Dorsolateral prefrontal cortex (tissue), 120 donors: ENCODE measurements at regions of chrX and their contacts with region 1.

Region 1: GRCh38 chrX:10014462-10015356 is 47.6 kb downstream of the CLDN34 start:
- DNase-seq: peak; percentile 56 to 87 (median 76)
- H3K4me3 ChIP-seq: peak overlapping the region; percentile 31 to 74 (median 63)
- H3K27ac ChIP-seq: peak overlapping the region in 57 of 59 donors; percentile 43 to 90 (median 81)
- H3K27me3 ChIP-seq: peaks cover 0 to 75% (median 20%) of the 10 kb centered on the region in 45 donors
- CTCF ChIP-seq: peak in 5 of 56 donors; percentile 4 to 27 (median 17)

Region 2: GRCh38 chrX:10052906-10053625 is 38.4 kb after region 1 on chrX:
- intact Hi-C with region 1: loop called in 1 of 2 experiments (anchors 5 kb)
- DNase-seq: peak in 9 of 10 donors; percentile 46 to 78 (median 63)
- H3K4me3 ChIP-seq: no peak overlapping the region
- H3K27ac ChIP-seq: peak overlapping the region in 56 of 59 donors; percentile 3 to 88 (median 72)
- H3K27me3 ChIP-seq: peaks cover 0 to 62% (median 4%) of the 10 kb centered on the region in 45 donors
- CTCF ChIP-seq: peak in 16 of 56 donors; percentile 7 to 50 (median 20)

Region 3: GRCh38 chrX:10111364-10112148 is 96.8 kb after region 1 on chrX:
- intact Hi-C with region 1: loop called (anchors 2 to 5 kb)
- DNase-seq: no peak
- H3K4me3 ChIP-seq: no peak overlapping the region
- H3K27ac ChIP-seq: peak overlapping the region in 51 of 59 donors; percentile 0 to 79 (median 57)
- H3K27me3 ChIP-seq: peaks cover 0 to 42% (median 5%) of the 10 kb centered on the region in 45 donors
- CTCF ChIP-seq: no peak